ENCODE measurements at regions of chr2 and their contacts with region 1.

Region 1: GRCh38 chr2:177552422-177553175 is 160.0 kb downstream of the AGPS start:
- DNase-seq: peak; percentile 88
- ATAC-seq: peak; percentile 97
- H3K4me3 ChIP-seq: peak overlapping the region; percentile 59
- H3K27ac ChIP-seq: peak overlapping the region; percentile 87
- H3K4me1 ChIP-seq: no peaks in the 10 kb centered on the region
- H3K27me3 ChIP-seq: no peaks in the 10 kb centered on the region
- CTCF ChIP-seq: no peak
- POLR2A ChIP-seq: no peak; the same call in 1 of the 2 replicates
- RAD21 ChIP-seq: no peak

Region 2: GRCh38 chr2:177618255-177619253 is 66.0 kb after region 1 on chr2:
- CTCF ChIA-PET with region 1: no interaction called
- POLR2A ChIA-PET with region 1: no interaction called
- dilution Hi-C with region 1: no loop called
- in situ Hi-C with region 1: loop called (anchors 5 kb)
- intact Hi-C with region 1: loop called (anchors 5 kb)
- DNase-seq: peak; percentile 80
- ATAC-seq: peak; percentile 99
- H3K4me3 ChIP-seq: peak overlapping the region; percentile 92
- H3K27ac ChIP-seq: peak overlapping the region; percentile 100
- H3K4me1 ChIP-seq: no peaks in the 10 kb centered on the region; the same call in 1 of the 2 replicates
- H3K27me3 ChIP-seq: no peaks in the 10 kb centered on the region; the same call in 1 of the 2 replicates
- CTCF ChIP-seq: no peak
- POLR2A ChIP-seq: 0 out of 2 replicates have a peak, but pooled peaks have one; percentile 32
- RAD21 ChIP-seq: no peak

Measured in IMR-90 (cell line).